ENCODE measurements at regions of chr12 and their contacts with region 1.

Region 1: GRCh38 chr12:46342562-46343033 is 30.0 kb downstream of the SLC38A2 start:
- DNase-seq: no peak
- ATAC-seq: peak; percentile 90
- H3K4me3 ChIP-seq: no peak overlapping the region
- H3K27ac ChIP-seq: peak overlapping the region; percentile 30; the same call in 1 of the 2 replicates
- H3K4me1 ChIP-seq: peaks cover 2% of the 10 kb centered on the region; the same call in 1 of the 2 replicates
- H3K27me3 ChIP-seq: no peaks in the 10 kb centered on the region
- CTCF ChIP-seq: peak; percentile 72

Region 2: GRCh38 chr12:46933947-46934346 is 591.3 kb after region 1 on chr12:
- CTCF ChIA-PET with region 1: no interaction called
- POLR2A ChIA-PET with region 1: no interaction called
- in situ Hi-C with region 1: no loop called
- intact Hi-C with region 1: loop called (anchors 10 kb)
- DNase-seq: peak; percentile 56
- ATAC-seq: peak; percentile 92
- H3K4me3 ChIP-seq: no peak overlapping the region
- H3K27ac ChIP-seq: no peak overlapping the region
- H3K4me1 ChIP-seq: peaks cover 4% of the 10 kb centered on the region
- H3K27me3 ChIP-seq: no peaks in the 10 kb centered on the region
- CTCF ChIP-seq: peak; percentile 72; the same call in 1 of the 2 replicates

Measured in Panc1 (cell line).